H1 (cell line): ENCODE measurements at regions of chr6 and their contacts with region 1.

Region 1: GRCh38 chr6:29617782-29618557 is 15.0 kb downstream of the GABBR1 start:
- DNase-seq: no peak
- H3K4me3 ChIP-seq: no peak overlapping the region
- H3K27ac ChIP-seq: no peak overlapping the region
- H3K4me1 ChIP-seq: no peaks in the 10 kb centered on the region; a peak in 2 of 7 replicates
- H3K27me3 ChIP-seq: no peaks in the 10 kb centered on the region
- CTCF ChIP-seq: peak; percentile 87 to 97 (median 90)
- EP300 ChIP-seq: no peak
- POLR2A ChIP-seq: no peak
- RAD21 ChIP-seq: peak; percentile 52 to 59

Region 2: GRCh38 chr6:29602564-29603361 is 15.2 kb before region 1 on chr6:
- CTCF ChIA-PET with region 1: interaction called, 31 read pairs
- POLR2A ChIA-PET with region 1: interaction called, 58 read pairs
- DNase-seq: peak in 1 of 2 experiments; percentile 63
- H3K4me3 ChIP-seq: no peak overlapping the region
- H3K27ac ChIP-seq: 0 out of 2 replicates have a peak overlapping the region, but pooled peaks have one; percentile 19
- H3K4me1 ChIP-seq: peaks cover 0 to 10% (median 0%) of the 10 kb centered on the region in 4 experiments; a peak in 3 of 7 replicates
- H3K27me3 ChIP-seq: no peaks in the 10 kb centered on the region
- CTCF ChIP-seq: peak; percentile 38 to 64 (median 47); a peak in 3 of 4 replicates
- EP300 ChIP-seq: no peak
- POLR2A ChIP-seq: no peak
- RAD21 ChIP-seq: peak; percentile 32 to 48; a peak in 3 of 4 replicates

Region 3: DNA sequence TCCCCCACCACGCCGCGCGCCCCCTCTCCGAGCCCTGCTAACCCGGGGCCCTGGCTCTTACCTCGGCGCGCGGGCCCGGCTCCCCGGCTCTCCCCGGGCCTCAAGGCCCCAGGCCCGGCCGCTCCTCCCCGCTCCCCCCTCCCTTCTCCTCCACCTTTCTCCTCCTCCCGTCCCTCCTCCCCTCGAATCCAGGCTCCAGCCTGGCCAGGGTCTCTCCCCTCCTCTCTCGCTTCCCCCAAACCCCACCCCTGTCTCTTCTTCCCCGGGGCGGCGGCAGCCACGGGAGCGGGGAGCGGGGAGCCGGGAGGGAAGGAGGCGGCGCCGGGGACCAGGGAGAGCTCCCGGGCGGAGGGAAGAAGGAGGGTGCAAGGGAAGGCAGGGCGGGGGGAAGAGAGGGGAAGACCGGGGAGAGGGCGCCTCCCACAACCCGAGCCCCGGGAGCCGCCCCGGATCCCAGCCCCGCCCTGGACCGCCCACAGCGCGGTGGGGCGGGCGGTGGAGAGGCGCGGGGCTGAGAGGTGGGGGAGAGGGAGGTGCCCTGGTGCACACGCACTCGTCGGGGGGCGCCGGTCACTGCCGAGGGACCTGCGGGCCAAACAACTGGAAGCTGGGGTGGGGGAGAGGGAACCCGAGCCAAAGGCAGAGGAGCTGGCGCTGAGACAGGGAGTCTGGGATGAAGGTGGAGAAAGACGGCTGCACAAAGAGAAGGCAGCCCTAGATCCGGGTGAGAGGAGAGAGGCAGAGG is 15.0 kb after region 1 on chr6 and contains the start of gene GABBR1:
- CTCF ChIA-PET with region 1: interaction called, 12 read pairs
- POLR2A ChIA-PET with region 1: interaction called, 6 read pairs
- DNase-seq: peak in 1 of 2 experiments; percentile 91
- H3K4me3 ChIP-seq: peak within 1 kb of the TSS; percentile 68 to 84 (median 76)
- H3K27ac ChIP-seq: peak within 1 kb of the TSS; percentile 53; the same call in 1 of the 2 replicates
- H3K4me1 ChIP-seq: peaks cover 4 to 23% (median 13%) of the 10 kb centered on the region in 4 experiments
- H3K27me3 ChIP-seq: no peaks in the 10 kb centered on the region
- CTCF ChIP-seq: no peak
- EP300 ChIP-seq: 0 out of 3 replicates have a peak, but pooled peaks of 1 of the 2 experiments have one; percentile 17
- POLR2A ChIP-seq: no peak; a peak in 1 of 3 replicates
- RAD21 ChIP-seq: no peak
- total RNA-seq, gene GABBR1: 67.8 and 75.9 TPM in 2 replicates